Activated naive CD4-positive, alpha-beta T cell treated with anti-CD3 and anti-CD28 coated beads for 36 hours (primary cell): ENCODE measurements at regions of chr3 and their contacts with region 1.

Region 1: GRCh38 chr3:43742920-43743319 is 52.2 kb downstream of the ABHD5 start:
- DNase-seq: no peak
- H3K4me3 Mint-ChIP-seq: no peak overlapping the region
- H3K27ac Mint-ChIP-seq: no peak overlapping the region
- H3K4me1 Mint-ChIP-seq: no peaks in the 10 kb centered on the region
- H3K27me3 Mint-ChIP-seq: no peaks in the 10 kb centered on the region

Region 2: DNA sequence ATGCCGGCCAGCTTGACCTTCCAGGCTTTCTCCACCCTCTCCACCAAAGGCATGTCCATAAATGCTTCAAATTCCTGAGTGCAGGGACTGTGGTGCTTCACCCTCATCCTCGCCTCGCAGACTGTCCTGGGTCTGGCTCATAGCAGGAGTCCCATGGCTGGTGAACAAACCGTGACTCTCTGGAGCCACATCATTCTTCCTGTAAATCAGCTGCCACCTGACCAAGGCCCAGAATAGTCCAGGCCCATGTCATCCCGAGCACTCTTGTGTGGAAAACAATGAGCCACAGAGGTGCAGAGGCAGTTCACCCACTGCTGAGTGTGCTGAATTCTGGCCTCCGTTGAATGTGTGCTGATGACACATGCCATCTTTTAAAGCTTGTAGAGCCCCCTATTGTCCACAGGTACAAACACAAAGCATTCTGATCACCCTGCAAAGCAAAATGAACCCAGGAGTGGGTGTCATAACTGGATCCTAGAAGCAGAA is 16.4 kb after region 1 on chr3:
- CTCF ChIA-PET with region 1: no interaction called
- intact Hi-C with region 1: loop called (anchors 1 kb)
- DNase-seq: peak; percentile 17
- H3K4me3 Mint-ChIP-seq: no peak overlapping the region
- H3K27ac Mint-ChIP-seq: no peak overlapping the region
- H3K4me1 Mint-ChIP-seq: peaks cover 46% of the 10 kb centered on the region
- H3K27me3 Mint-ChIP-seq: no peaks in the 10 kb centered on the region